Ovary (tissue), 10 donors: ENCODE measurements at regions of chr10 and their contacts with region 1.

Region 1: DNA sequence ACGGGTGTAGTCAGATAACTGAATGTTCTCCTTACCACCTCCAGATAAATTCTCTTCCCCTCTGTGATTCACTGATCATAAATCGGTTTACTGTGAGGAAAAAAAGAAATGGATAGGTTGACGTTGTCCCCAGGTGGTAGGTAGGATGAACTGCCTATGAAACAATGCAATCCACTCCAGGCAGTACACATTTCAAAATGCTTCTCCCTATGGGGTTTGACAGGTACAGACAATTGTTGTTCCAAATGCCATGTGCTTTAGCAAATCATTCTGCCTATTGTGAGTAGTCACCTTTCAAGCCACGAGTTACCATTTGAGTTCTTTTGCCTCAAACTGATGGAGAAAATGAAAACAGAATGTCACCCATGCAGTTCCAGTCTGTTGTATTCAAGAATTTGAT is 21.8 kb downstream of the VIM start:
- DNase-seq: no peak
- H3K4me3 ChIP-seq: no peak overlapping the region
- H3K27ac ChIP-seq: no peak overlapping the region
- H3K4me1 ChIP-seq: no peaks in the 10 kb centered on the region
- H3K27me3 ChIP-seq: no peaks in the 10 kb centered on the region
- CTCF ChIP-seq: peak in 1 of 3 donors; percentile 20
- EP300 ChIP-seq: no peak
- POLR2A ChIP-seq: no peak

Region 2: DNA sequence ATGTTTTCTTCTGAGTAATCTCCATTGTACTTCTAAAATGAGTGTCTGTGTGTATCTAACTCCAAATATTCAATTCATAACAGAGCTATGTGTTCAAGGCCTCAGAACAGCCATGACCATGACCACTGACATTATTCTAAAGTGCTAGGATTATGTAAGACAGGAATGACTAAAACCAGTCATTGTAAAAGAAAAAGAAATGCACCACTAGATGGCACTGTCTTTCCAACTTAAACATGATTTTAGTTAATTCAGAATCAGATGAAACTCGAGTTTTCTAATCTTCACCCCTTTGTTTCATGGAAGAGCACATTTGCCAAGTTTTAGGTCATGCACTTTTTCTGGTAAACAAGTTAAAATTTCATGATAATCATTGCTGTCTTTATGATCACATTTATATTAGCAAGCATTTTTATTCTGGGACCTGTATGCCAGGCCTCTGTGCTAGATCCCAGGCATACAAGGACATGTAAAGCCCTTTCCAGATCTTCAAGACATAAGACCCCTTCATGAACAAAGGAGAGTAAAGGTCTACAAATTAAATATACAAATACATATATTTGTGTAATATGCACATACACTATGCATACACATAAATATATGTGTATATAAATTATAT is 406.5 kb before region 1 on chr10:
- intact Hi-C with region 1: loop called in 3 of 4 experiments (anchors 2 to 5 kb)
- DNase-seq: no peak
- H3K4me3 ChIP-seq: no peak overlapping the region
- H3K27ac ChIP-seq: peak overlapping the region in 1 of 2 donors; percentile 72
- H3K4me1 ChIP-seq: peaks cover 3% of the 10 kb centered on the region
- H3K27me3 ChIP-seq: no peaks in the 10 kb centered on the region
- CTCF ChIP-seq: peak; percentile 43 to 73 (median 64)
- EP300 ChIP-seq: no peak
- POLR2A ChIP-seq: no peak

Region 3: GRCh38 chr10:17092216-17092944 is 157.4 kb before region 1 on chr10:
- intact Hi-C with region 1: no loop called
- DNase-seq: no peak
- H3K4me3 ChIP-seq: no peak overlapping the region
- H3K27ac ChIP-seq: no peak overlapping the region
- H3K4me1 ChIP-seq: peaks cover 8% of the 10 kb centered on the region
- H3K27me3 ChIP-seq: no peaks in the 10 kb centered on the region
- CTCF ChIP-seq: no peak
- EP300 ChIP-seq: no peak
- POLR2A ChIP-seq: no peak

Region 4: DNA sequence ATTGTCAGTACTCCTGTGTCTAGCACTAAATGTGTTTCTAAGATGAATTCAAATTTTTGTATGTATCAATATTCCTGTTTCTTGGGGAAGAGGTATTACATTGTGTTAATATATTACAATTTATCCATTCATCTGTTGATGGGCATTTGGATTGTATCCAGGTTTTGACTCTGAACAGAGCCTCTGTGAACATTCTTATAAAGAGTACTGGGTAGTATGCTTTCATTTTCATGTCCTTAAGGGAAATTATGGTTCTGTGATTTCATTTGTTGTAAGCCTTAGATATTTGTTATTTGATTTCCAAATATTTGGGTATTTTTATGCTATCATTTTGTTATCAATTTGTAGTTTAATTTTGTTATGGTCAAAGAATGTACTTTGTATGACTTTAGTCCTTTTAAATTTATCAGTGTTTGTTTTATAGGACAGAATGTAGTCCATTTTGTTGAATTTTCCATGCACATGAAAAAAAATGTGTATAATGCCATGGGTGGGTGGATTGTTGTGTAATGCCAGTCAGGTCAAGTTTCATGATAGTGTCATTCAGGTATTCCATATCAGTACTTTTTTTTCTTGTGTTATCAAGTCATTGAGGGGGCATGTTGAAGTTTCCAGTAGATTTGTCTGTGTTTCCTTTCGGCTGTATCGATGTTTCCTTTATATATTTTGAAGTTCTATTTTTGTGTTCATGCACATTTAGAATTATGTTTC is 432.6 kb after region 1 on chr10:
- intact Hi-C with region 1: no loop called
- DNase-seq: no peak
- H3K4me3 ChIP-seq: no peak overlapping the region
- H3K27ac ChIP-seq: no peak overlapping the region
- H3K4me1 ChIP-seq: peaks cover 2% of the 10 kb centered on the region
- H3K27me3 ChIP-seq: no peaks in the 10 kb centered on the region
- CTCF ChIP-seq: no peak
- EP300 ChIP-seq: no peak
- POLR2A ChIP-seq: no peak